GM12878 (cell line): ENCODE measurements at regions of chr14 and their contacts with region 1.

Region 1: GRCh38 chr14:24895243-24895583 is 154.7 kb downstream of the STXBP6 start:
- DNase-seq: no peak
- ATAC-seq: peak; percentile 34
- H3K4me3 ChIP-seq: no peak overlapping the region
- H3K27ac ChIP-seq: no peak overlapping the region
- H3K4me1 ChIP-seq: no peaks in the 10 kb centered on the region
- H3K27me3 ChIP-seq: no peaks in the 10 kb centered on the region
- CTCF ChIP-seq: no peak
- EP300 ChIP-seq: no peak
- POLR2A ChIP-seq: no peak
- RAD21 ChIP-seq: no peak

Region 2: DNA sequence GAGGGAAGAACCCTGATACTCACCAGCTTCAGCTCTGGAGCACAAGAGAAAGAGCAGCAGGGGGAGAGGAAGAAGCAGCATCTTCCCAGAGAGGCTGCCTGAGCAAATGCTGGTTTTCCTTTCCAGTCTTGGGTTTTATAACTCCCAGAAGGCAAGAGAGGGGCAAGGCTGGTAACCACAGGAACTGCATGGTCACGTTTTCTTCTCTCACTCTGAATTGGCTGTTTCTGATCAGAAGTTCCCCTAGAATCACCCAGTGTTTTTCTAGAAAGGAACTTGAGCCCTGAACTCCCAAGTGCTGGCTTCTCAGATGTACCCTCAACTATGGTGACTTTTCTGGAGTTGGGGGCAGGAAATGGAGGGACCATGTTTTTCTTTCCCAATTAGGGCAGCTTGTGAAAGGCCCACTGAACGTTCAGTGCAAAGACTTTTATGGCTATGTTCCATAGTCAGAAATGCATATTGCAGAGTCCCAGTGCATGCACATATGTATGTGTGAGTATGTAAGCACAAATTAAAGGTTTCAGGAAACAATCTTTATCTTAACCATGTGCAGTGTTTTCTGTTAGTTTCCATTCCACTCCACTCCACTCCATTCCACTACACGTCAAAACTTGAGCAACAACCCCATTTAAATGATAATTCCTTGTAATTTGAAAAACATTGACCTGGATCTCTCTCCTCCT is 386.9 kb before region 1 on chr14 and contains the start of gene CMA1:
- CTCF ChIA-PET with region 1: no interaction called
- POLR2A ChIA-PET with region 1: no interaction called
- RAD21 ChIA-PET with region 1: no interaction called
- SMC1A ChIA-PET with region 1: no interaction called
- in situ Hi-C with region 1: no loop called
- intact Hi-C with region 1: no loop called
- DNase-seq: no peak
- ATAC-seq: 0 out of 3 replicates have a peak, but pooled peaks have one; percentile 29
- H3K4me3 ChIP-seq: no peak within 1 kb of the TSS
- H3K27ac ChIP-seq: no peak within 1 kb of the TSS
- H3K4me1 ChIP-seq: no peaks in the 10 kb centered on the region; the same call in 1 of the 2 replicates
- H3K27me3 ChIP-seq: no peaks in the 10 kb centered on the region
- CTCF ChIP-seq: no peak
- EP300 ChIP-seq: no peak
- POLR2A ChIP-seq: no peak
- RAD21 ChIP-seq: no peak
- polyA plus RNA-seq, gene CMA1: not detected

Region 3: DNA sequence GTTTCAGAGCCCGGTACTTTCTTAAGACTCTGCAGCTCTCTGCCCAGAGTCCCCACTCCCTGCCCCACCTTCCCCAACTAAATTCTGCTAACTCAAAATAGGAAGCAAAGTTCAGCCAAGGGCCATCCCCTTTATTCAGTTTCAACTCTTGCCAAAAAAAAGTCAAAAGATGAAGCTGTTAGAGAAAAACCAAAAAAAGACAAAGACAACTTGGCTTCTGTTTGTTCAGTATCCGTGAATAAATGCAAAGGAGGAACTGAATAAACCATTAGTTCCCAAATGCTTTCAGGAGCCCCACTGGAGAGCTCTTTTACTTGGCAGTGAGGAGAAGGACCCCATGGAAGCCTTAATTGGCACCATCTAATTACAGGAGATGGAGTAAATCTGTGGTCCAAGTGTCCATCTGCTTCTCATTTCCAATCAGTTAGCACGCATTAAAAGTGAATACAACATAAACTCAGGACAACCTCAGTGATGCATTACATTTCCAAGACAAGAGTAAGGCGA is 105.8 kb before region 1 on chr14:
- CTCF ChIA-PET with region 1: no interaction called
- POLR2A ChIA-PET with region 1: no interaction called
- RAD21 ChIA-PET with region 1: no interaction called
- SMC1A ChIA-PET with region 1: no interaction called
- in situ Hi-C with region 1: no loop called
- intact Hi-C with region 1: no loop called
- DNase-seq: no peak
- ATAC-seq: no peak
- H3K4me3 ChIP-seq: no peak overlapping the region
- H3K27ac ChIP-seq: no peak overlapping the region
- H3K4me1 ChIP-seq: no peaks in the 10 kb centered on the region
- H3K27me3 ChIP-seq: no peaks in the 10 kb centered on the region
- CTCF ChIP-seq: no peak
- EP300 ChIP-seq: no peak
- POLR2A ChIP-seq: no peak
- RAD21 ChIP-seq: no peak

Region 4: DNA sequence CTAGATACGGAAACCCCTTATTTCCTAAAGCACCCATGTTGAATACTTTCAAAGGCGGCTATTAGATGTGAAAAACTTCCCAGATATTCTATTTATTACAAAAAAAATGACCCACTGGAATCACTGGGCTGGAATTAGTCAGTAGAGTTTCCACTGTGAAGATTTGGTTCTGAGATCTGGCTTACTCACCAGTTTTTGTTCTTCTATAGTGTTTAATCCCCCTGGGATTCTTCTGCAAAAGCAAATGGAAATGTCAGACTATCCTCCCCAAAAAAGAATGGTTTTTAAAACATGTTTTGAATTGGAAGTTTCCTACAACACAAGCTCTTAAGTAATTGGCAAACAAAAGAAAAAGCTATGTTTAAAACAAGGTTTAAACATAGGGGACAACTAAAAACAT is 11.6 kb before region 1 on chr14:
- CTCF ChIA-PET with region 1: interaction called, 12 read pairs
- POLR2A ChIA-PET with region 1: interaction called, 4 read pairs
- RAD21 ChIA-PET with region 1: interaction called, 10 read pairs
- SMC1A ChIA-PET with region 1: interaction called, 8 read pairs
- in situ Hi-C with region 1: no loop called
- intact Hi-C with region 1: no loop called
- DNase-seq: no peak
- ATAC-seq: no peak
- H3K4me3 ChIP-seq: no peak overlapping the region
- H3K27ac ChIP-seq: no peak overlapping the region
- H3K4me1 ChIP-seq: no peaks in the 10 kb centered on the region
- H3K27me3 ChIP-seq: no peaks in the 10 kb centered on the region
- CTCF ChIP-seq: no peak
- EP300 ChIP-seq: no peak
- POLR2A ChIP-seq: no peak
- RAD21 ChIP-seq: no peak